Activated CD4-positive, alpha-beta memory T cell treated with anti-CD3 and anti-CD28 coated beads, Interleukin-2, amount 10 ng/mL, durations not matched to agents 7 days and 5 days (primary cell): ENCODE measurements at regions of chr11 and their contacts with region 1.

Region 1: GRCh38 chr11:45110562-45110961 is 35.9 kb upstream of the PRDM11 start:
- DNase-seq: no peak
- H3K4me3 Mint-ChIP-seq: no peak overlapping the region
- H3K27ac Mint-ChIP-seq: no peak overlapping the region
- H3K4me1 Mint-ChIP-seq: no peaks in the 10 kb centered on the region
- H3K27me3 Mint-ChIP-seq: peaks cover 29% of the 10 kb centered on the region

Region 2: DNA sequence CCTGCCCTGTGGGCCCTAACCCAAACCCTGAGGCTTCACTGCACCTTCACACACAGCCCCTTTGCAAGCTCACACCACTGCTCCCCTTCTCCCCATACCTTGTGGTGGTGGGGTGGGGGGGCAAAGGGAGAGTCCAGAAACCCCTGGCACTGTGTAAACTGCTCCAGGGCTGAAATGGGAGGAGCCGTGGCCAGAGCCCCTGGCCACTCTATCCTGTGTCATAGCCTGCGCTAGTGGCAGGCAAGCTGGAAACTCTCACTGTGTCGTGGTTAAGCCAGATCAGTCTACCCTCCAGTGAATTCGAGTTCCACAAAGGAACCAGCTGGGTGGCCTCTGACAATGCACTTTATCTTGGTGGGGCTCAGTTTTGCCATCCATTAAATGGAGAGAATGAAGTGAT is 183.9 kb after region 1 on chr11:
- CTCF ChIA-PET with region 1: interaction called, 17 read pairs
- POLR2A ChIA-PET with region 1: no interaction called
- DNase-seq: no peak
- H3K4me3 Mint-ChIP-seq: no peak overlapping the region
- H3K27ac Mint-ChIP-seq: no peak overlapping the region
- H3K4me1 Mint-ChIP-seq: no peaks in the 10 kb centered on the region
- H3K27me3 Mint-ChIP-seq: peaks cover 47% of the 10 kb centered on the region

Region 3: GRCh38 chr11:45332276-45332934 is 221.8 kb after region 1 on chr11:
- CTCF ChIA-PET with region 1: interaction called, 47 read pairs
- POLR2A ChIA-PET with region 1: no interaction called
- DNase-seq: peak; percentile 38
- H3K4me3 Mint-ChIP-seq: no peak overlapping the region
- H3K27ac Mint-ChIP-seq: no peak overlapping the region
- H3K4me1 Mint-ChIP-seq: no peaks in the 10 kb centered on the region
- H3K27me3 Mint-ChIP-seq: peaks cover 13% of the 10 kb centered on the region